Endothelial cell of umbilical vein (primary cell): ENCODE measurements at regions of chr3 and their contacts with region 1.

Region 1: GRCh38 chr3:156211583-156211982 is 91.2 kb downstream of the KCNAB1 start:
- DNase-seq: peak; percentile 90
- H3K4me3 ChIP-seq: no peak overlapping the region
- H3K27ac ChIP-seq: peak overlapping the region; percentile 49
- H3K4me1 ChIP-seq: peaks cover 28% of the 10 kb centered on the region
- H3K27me3 ChIP-seq: no peaks in the 10 kb centered on the region
- CTCF ChIP-seq: no peak
- POLR2A ChIP-seq: peak; percentile 24

Region 2: GRCh38 chr3:156260331-156260730 is 48.7 kb after region 1 on chr3:
- CTCF ChIA-PET with region 1: no interaction called
- POLR2A ChIA-PET with region 1: no interaction called
- dilution Hi-C with region 1: no loop called
- intact Hi-C with region 1: loop called (anchors 1 kb)
- DNase-seq: no peak
- H3K4me3 ChIP-seq: no peak overlapping the region
- H3K27ac ChIP-seq: peak overlapping the region; percentile 56
- H3K4me1 ChIP-seq: peaks cover 14% of the 10 kb centered on the region
- H3K27me3 ChIP-seq: no peaks in the 10 kb centered on the region
- CTCF ChIP-seq: no peak
- POLR2A ChIP-seq: no peak

Region 3: GRCh38 chr3:156317457-156318074 is 106.0 kb after region 1 on chr3:
- CTCF ChIA-PET with region 1: interaction called, 6 read pairs
- POLR2A ChIA-PET with region 1: no interaction called
- dilution Hi-C with region 1: no loop called
- intact Hi-C with region 1: loop called (anchors 1 kb)
- DNase-seq: peak; percentile 96
- H3K4me3 ChIP-seq: no peak overlapping the region
- H3K27ac ChIP-seq: peak overlapping the region; percentile 72
- H3K4me1 ChIP-seq: peaks cover 24% of the 10 kb centered on the region
- H3K27me3 ChIP-seq: no peaks in the 10 kb centered on the region
- CTCF ChIP-seq: no peak
- POLR2A ChIP-seq: no peak

Region 4: GRCh38 chr3:156489462-156489911 is 277.9 kb after region 1 on chr3:
- CTCF ChIA-PET with region 1: interaction called, 4 read pairs
- POLR2A ChIA-PET with region 1: no interaction called
- dilution Hi-C with region 1: no loop called
- intact Hi-C with region 1: loop called (anchors 2 kb)
- DNase-seq: peak; percentile 85
- H3K4me3 ChIP-seq: no peak overlapping the region
- H3K27ac ChIP-seq: peak overlapping the region; percentile 74
- H3K4me1 ChIP-seq: peaks cover 31% of the 10 kb centered on the region
- H3K27me3 ChIP-seq: no peaks in the 10 kb centered on the region
- CTCF ChIP-seq: no peak
- POLR2A ChIP-seq: no peak